ENCODE measurements at regions of chr5 and their contacts with region 1.

Region 1: DNA sequence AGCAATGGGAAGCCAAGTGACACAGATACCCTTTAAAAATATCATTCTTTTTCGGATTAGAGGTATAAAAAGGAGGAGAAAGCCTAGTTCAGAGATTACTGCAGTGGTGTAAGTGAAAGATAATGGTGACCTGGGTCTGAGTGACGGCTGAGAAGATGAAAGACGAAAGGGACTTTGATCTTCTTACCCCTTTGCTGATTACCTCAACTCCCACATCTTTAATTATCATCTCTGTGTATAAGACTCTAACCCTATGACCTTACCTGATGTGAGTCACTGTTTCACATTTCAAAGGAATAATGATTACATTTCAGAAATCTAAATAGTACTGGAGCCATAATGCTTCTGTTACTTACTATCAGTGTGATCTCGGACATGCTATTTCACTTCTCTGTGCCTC is 21.4 kb upstream of the CCNO start:
- DNase-seq: peak in 1 of 2 experiments; percentile 6
- H3K4me3 ChIP-seq: no peak overlapping the region
- H3K4me3 Mint-ChIP-seq: no peak overlapping the region
- H3K27ac Mint-ChIP-seq: no peak overlapping the region
- H3K4me1 ChIP-seq: peaks cover 28% of the 10 kb centered on the region
- H3K4me1 Mint-ChIP-seq: peaks cover 8% of the 10 kb centered on the region
- H3K27me3 ChIP-seq: no peaks in the 10 kb centered on the region
- H3K27me3 Mint-ChIP-seq: no peaks in the 10 kb centered on the region
- CTCF ChIP-seq: no peak

Region 2: GRCh38 chr5:55226027-55226933 is 28.5 kb before region 1 on chr5:
- CTCF ChIA-PET with region 1: no interaction called
- POLR2A ChIA-PET with region 1: no interaction called
- intact Hi-C with region 1: loop called (anchors 2 kb)
- DNase-seq: peak; percentile 86 to 89
- H3K4me3 ChIP-seq: peak overlapping the region; percentile 82
- H3K4me3 Mint-ChIP-seq: peak overlapping the region; percentile 87
- H3K27ac Mint-ChIP-seq: no peak overlapping the region
- H3K4me1 ChIP-seq: no peaks in the 10 kb centered on the region
- H3K4me1 Mint-ChIP-seq: peaks cover 10% of the 10 kb centered on the region
- H3K27me3 ChIP-seq: peaks cover 3% of the 10 kb centered on the region
- H3K27me3 Mint-ChIP-seq: no peaks in the 10 kb centered on the region
- CTCF ChIP-seq: peak; percentile 83 to 91